Activated T-helper 1 cell treated with anti-CD3 and anti-CD28 coated beads, Interleukin-12 subunit alpha, Interleukin-12 subunit beta, Interleukin-2, Interleukin-4 antibody, amounts not matched to agents 30 ng/mL and 10 ng/mL and 1 ng/mL, durations not matched to agents 14 hours and 24 hours and 36 hours (primary cell): ENCODE measurements at regions of chr4 and their contacts with region 1.

Region 1: GRCh38 chr4:182478475-182478874 is 235.3 kb downstream of the TENM3 start:
- DNase-seq: no peak
- H3K4me3 Mint-ChIP-seq: no peak overlapping the region
- H3K27ac Mint-ChIP-seq: no peak overlapping the region
- H3K4me1 Mint-ChIP-seq: no peaks in the 10 kb centered on the region
- H3K27me3 Mint-ChIP-seq: no peaks in the 10 kb centered on the region

Region 2: GRCh38 chr4:182277377-182277776 is 201.1 kb before region 1 on chr4:
- intact Hi-C with region 1: no loop called
- DNase-seq: no peak
- H3K4me3 Mint-ChIP-seq: no peak overlapping the region
- H3K27ac Mint-ChIP-seq: no peak overlapping the region
- H3K4me1 Mint-ChIP-seq: no peaks in the 10 kb centered on the region
- H3K27me3 Mint-ChIP-seq: no peaks in the 10 kb centered on the region

Region 3: GRCh38 chr4:182507805-182508204 is 29.3 kb after region 1 on chr4:
- intact Hi-C with region 1: no loop called
- DNase-seq: no peak
- H3K4me3 Mint-ChIP-seq: no peak overlapping the region
- H3K27ac Mint-ChIP-seq: no peak overlapping the region
- H3K4me1 Mint-ChIP-seq: no peaks in the 10 kb centered on the region
- H3K27me3 Mint-ChIP-seq: peaks cover 2% of the 10 kb centered on the region

Region 4: GRCh38 chr4:182711211-182711610 is 232.7 kb after region 1 on chr4:
- intact Hi-C with region 1: no loop called
- DNase-seq: no peak
- H3K4me3 Mint-ChIP-seq: no peak overlapping the region
- H3K27ac Mint-ChIP-seq: no peak overlapping the region
- H3K4me1 Mint-ChIP-seq: no peaks in the 10 kb centered on the region
- H3K27me3 Mint-ChIP-seq: no peaks in the 10 kb centered on the region

Region 5: GRCh38 chr4:182925298-182925738 is 446.8 kb after region 1 on chr4:
- intact Hi-C with region 1: loop called (anchors 1 kb)
- DNase-seq: peak; percentile 41
- H3K4me3 Mint-ChIP-seq: no peak overlapping the region
- H3K27ac Mint-ChIP-seq: no peak overlapping the region
- H3K4me1 Mint-ChIP-seq: peaks cover 8% of the 10 kb centered on the region
- H3K27me3 Mint-ChIP-seq: peaks cover 25% of the 10 kb centered on the region